CD14-positive monocyte (primary cell): ENCODE measurements at regions of chr9 and their contacts with region 1.

Region 1: DNA sequence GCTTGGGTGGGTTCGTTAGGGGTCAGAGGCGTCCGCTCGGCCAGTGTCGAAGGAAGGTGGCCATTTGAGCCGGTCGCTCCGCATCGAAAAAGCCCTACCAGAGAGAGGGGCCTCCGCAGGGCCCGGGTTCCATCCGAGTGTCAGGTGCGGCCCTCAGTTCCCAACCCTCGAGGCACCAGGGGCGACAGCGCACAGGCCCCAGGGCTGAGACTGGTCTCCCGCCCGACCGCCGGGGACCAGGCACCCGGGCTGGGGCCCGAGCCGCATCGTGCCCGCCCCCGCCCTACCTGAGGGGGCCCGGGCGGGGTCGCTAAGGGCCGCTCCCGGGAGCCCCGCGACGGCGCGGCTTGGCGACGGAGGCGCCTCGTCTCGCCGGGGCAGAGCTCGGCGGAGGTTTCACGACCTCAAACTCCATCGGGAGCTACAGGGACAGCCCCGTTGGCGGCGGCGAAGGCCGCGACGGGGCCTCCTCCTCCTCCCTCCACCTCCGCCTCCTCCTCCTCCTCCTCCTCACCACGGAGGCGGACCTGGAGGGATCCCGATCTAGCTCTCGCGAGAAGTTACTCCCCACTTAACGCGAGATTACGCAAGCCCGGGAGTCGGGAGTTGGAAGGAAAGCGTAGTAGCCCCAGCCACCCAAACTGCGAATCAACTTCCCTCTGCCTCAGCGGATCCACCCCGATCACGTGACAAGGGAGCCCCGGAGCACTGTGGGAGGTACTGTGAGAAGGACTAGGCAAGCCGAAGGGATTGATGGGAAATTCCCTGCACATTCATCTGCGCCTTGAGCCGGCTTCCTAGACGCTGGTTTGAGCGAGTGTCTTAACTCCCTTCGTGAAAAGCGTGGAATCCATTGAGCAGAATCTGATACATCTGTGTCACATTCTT is at the start of gene RC3H2:
- DNase-seq: peak; percentile 99 to 100 (median 99)
- H3K4me3 ChIP-seq: peak within 1 kb of the TSS; percentile 63 to 93 (median 71)
- H3K4me3 Mint-ChIP-seq: peak within 1 kb of the TSS; percentile 90 to 94
- H3K27ac ChIP-seq: peak within 1 kb of the TSS; percentile 83 to 90
- H3K27ac Mint-ChIP-seq: peak within 1 kb of the TSS; percentile 91 to 96 (median 93)
- H3K4me1 ChIP-seq: peaks cover 19 to 32% of the 10 kb centered on the region in 2 donors
- H3K4me1 Mint-ChIP-seq: peaks cover 16% of the 10 kb centered on the region
- H3K27me3 ChIP-seq: no peaks in the 10 kb centered on the region
- H3K27me3 Mint-ChIP-seq: peaks cover 0 to 1% (median 0%) of the 10 kb centered on the region in 3 donors
- CTCF ChIP-seq: no peak
- polyA plus RNA-seq, gene RC3H2: 11.3 to 24.6 (median 11.8) TPM

Region 2: GRCh38 chr9:122099271-122099869 is 805.7 kb before region 1 on chr9:
- intact Hi-C with region 1: loop called in 1 of 2 experiments (anchors 5 kb)
- DNase-seq: peak; percentile 63 to 69 (median 67)
- H3K4me3 ChIP-seq: peak overlapping the region in 1 of 3 experiments; percentile 43
- H3K4me3 Mint-ChIP-seq: peak overlapping the region; percentile 65 to 76
- H3K27ac ChIP-seq: no peak overlapping the region
- H3K27ac Mint-ChIP-seq: no peak overlapping the region
- H3K4me1 ChIP-seq: peaks cover 5 to 6% of the 10 kb centered on the region in 2 donors
- H3K4me1 Mint-ChIP-seq: peaks cover 12% of the 10 kb centered on the region
- H3K27me3 ChIP-seq: peaks cover 0 to 5% of the 10 kb centered on the region in 2 donors
- H3K27me3 Mint-ChIP-seq: peaks cover 8 to 20% (median 18%) of the 10 kb centered on the region in 3 donors
- CTCF ChIP-seq: peak; percentile 87

Region 3: DNA sequence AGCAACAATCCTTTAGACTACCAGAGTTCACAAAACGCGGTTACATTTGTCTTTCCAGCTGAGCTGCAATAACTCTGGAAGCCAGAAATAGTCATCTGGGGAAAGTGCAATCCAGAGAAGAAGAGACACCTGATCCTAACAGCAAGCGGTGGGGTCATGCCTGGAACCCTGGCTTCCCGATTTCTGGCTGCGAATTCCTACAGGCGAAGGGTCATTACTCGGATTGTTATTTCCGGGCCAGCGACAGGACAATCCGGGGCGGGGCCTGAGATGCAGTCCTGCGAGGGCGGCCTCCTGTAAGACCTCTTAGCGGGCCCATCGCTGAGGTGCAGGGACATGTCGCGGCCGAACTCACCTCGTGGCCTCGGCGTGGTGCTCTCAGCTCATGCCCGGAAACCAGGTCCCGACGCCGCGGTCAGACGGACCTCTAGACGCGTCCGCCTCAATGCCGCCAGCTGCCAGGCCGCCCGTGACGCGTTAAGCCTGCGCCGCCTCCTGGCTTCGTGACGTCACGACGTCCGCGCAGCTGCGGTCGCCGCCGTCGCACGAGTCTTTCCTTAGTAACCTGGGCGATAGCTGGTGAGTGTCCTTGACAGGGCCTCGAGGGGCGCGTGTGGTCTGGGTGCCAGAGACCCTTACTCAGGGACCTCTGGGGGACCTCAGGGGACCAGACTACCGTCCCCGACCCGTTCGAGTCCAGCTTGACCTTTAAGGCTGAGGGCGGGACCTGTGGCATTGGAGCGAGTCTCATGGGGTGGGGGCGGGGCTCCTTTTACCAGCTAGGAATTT is 640.5 kb before region 1 on chr9 and contains the starts of genes MRRF and RBM18:
- intact Hi-C with region 1: loop called in 1 of 2 experiments (anchors 10 kb)
- DNase-seq: peak; percentile 94 to 96 (median 96)
- H3K4me3 ChIP-seq: peak within 1 kb of the TSS; percentile 88 to 94 (median 89)
- H3K4me3 Mint-ChIP-seq: peak within 1 kb of the TSS; percentile 98 to 99
- H3K27ac ChIP-seq: peak within 1 kb of the TSS; percentile 84 to 100
- H3K27ac Mint-ChIP-seq: peak within 1 kb of the TSS; percentile 100
- H3K4me1 ChIP-seq: peaks cover 14 to 27% of the 10 kb centered on the region in 2 donors
- H3K4me1 Mint-ChIP-seq: peaks cover 27% of the 10 kb centered on the region
- H3K27me3 ChIP-seq: no peaks in the 10 kb centered on the region
- H3K27me3 Mint-ChIP-seq: no peaks in the 10 kb centered on the region
- CTCF ChIP-seq: no peak
- polyA plus RNA-seq, gene MRRF: 16.0 to 34.4 (median 16.2) TPM
- polyA plus RNA-seq, gene RBM18: 10.4 to 26.3 (median 25.3) TPM

Region 4: DNA sequence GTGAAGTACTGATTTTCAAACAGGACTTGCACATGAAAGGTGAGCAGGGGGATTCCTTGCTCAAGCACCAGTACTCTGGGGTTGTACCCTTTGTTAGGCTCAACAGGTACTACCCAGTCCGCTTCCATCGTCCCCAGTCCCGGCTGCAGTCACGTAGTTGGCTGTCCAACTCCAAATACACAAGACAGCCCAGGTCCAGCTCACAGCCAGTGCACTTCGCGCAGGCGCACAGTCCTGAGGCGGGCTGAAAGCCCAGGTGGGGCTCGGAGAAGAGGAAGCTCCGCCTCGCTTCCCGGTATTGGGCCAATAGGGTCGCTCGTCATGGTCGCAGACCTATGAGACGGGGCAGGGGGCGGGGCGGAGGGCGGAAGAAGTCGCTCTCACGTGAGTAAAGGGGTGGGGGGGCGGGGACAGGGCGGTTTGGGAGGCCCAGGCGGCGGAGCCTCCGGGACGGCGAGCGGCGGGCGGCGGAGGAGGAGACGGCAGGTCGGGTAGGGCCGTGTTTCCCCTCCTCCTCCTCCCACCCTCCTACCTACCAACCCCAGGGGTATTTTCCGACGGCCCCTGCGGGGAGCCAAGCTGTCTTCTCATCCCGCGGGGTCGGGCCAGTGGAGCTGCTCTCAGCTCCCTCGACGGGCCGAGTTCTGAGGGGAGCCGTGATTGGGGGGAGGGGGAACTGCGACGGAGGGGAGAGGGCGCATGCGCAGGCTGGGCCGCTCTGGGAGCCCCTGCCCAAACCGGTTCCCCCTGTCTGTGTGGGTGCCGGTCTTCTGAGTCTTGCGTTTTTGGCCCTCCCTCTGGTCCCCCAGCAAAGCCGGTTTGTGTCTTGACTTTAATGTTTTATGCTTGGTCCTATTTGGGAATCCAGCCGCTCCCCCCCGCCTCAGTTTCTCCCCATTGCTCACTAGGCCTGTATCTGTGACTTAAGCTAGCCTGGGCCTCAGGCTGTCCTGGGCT is 35.8 kb after region 1 on chr9 and contains the start of gene RABGAP1:
- intact Hi-C with region 1: loop called (anchors 2 to 5 kb)
- DNase-seq: peak; percentile 98 to 99 (median 99)
- H3K4me3 ChIP-seq: peak within 1 kb of the TSS; percentile 47 to 82 (median 69)
- H3K4me3 Mint-ChIP-seq: peak within 1 kb of the TSS; percentile 92 to 98
- H3K27ac ChIP-seq: peak within 1 kb of the TSS; percentile 69 to 91
- H3K27ac Mint-ChIP-seq: peak within 1 kb of the TSS; percentile 87 to 95 (median 94)
- H3K4me1 ChIP-seq: peaks cover 35 to 40% of the 10 kb centered on the region in 2 donors
- H3K4me1 Mint-ChIP-seq: peaks cover 49% of the 10 kb centered on the region
- H3K27me3 ChIP-seq: no peaks in the 10 kb centered on the region
- H3K27me3 Mint-ChIP-seq: peaks cover 0 to 2% (median 0%) of the 10 kb centered on the region in 3 donors
- CTCF ChIP-seq: no peak
- polyA plus RNA-seq, gene RABGAP1: 14.7 to 24.1 (median 19.3) TPM

Region 5: GRCh38 chr9:122991370-122991830 is 86.3 kb after region 1 on chr9:
- intact Hi-C with region 1: loop called in 1 of 2 experiments (anchors 10 kb)
- DNase-seq: peak; percentile 18 to 64 (median 53)
- H3K4me3 ChIP-seq: no peak overlapping the region
- H3K4me3 Mint-ChIP-seq: no peak overlapping the region
- H3K27ac ChIP-seq: no peak overlapping the region
- H3K27ac Mint-ChIP-seq: peak overlapping the region in 2 of 7 donors; percentile 35 to 79
- H3K4me1 ChIP-seq: no peaks in the 10 kb centered on the region
- H3K4me1 Mint-ChIP-seq: no peaks in the 10 kb centered on the region
- H3K27me3 ChIP-seq: no peaks in the 10 kb centered on the region
- H3K27me3 Mint-ChIP-seq: no peaks in the 10 kb centered on the region
- CTCF ChIP-seq: peak; percentile 78